ENCODE measurements at regions of chr17 and their contacts with region 1.

Region 1: DNA sequence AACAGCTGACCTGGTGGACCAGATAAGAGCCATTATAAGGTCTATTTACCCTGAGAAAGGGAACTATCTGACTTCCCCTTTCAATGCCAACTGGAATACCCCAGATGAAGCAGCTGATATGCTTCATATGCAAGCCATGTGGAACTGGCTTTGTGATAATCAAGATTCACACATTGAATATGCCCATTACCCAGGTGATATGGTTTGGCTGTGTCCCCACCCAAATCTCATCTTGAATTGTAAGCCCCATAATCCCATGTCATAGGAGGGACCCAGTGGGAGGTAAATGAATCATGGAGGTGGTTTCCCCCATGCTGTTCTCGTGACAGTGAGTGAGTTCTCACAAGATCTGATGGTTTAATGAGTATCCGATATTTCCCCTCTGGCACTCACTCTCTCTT is 42.1 kb downstream of the IKZF3 start:
- DNase-seq: no peak
- CTCF ChIP-seq: no peak

Region 2: GRCh38 chr17:39808409-39808997 is 13.5 kb before region 1 on chr17:
- CTCF ChIA-PET with region 1: interaction called, 10 read pairs
- POLR2A ChIA-PET with region 1: interaction called, 3 read pairs
- DNase-seq: no peak
- CTCF ChIP-seq: no peak

Region 3: DNA sequence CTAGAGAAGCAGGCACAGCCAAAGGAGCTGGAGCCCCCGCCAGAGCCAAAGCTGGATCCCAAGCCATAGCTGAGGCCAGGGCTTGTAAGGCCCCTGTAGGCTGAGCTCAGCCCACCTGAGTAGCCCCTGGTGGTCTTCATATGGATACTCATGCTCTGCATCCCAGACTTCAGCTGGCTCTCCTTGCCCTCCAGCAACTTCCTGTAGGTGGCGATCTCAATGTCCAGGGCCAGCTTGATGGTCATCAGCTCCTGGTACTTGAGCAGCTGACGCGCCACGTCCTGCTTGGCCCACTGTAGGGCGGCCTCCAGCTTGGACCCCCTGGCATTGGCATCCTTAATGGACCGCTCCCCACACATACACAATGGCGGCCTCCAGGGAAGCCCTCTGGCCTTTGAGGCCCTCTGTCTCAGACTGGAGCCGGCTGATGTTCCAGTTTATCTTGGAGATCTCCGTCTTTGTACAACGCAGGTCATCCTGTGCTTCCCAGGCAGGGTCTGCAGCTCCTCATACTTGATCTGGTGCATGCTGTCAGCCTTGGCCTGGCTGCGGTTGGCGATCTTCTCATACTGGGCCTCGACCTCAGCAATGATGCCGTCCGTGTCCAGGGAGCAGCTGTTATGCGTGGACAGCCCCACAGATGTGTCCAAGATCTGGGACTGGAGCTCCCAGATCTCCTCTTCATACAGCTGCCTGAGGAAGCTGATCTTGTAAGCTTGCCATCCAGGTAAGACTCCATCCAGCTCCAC is 13.2 kb after region 1 on chr17:
- CTCF ChIA-PET with region 1: interaction called, 25 read pairs
- POLR2A ChIA-PET with region 1: no interaction called
- DNase-seq: no peak
- CTCF ChIP-seq: peak; percentile 14